H1 (cell line): ENCODE measurements at regions of chr20 and their contacts with region 1.

Region 1: GRCh38 chr20:5222919-5223634 is 93.7 kb downstream of the PROKR2 start:
- DNase-seq: peak; percentile 13 to 68
- H3K4me3 ChIP-seq: no peak overlapping the region
- H3K27ac ChIP-seq: no peak overlapping the region
- H3K4me1 ChIP-seq: no peaks in the 10 kb centered on the region
- H3K27me3 ChIP-seq: no peaks in the 10 kb centered on the region
- CTCF ChIP-seq: peak; percentile 75 to 91 (median 78)
- EP300 ChIP-seq: no peak
- POLR2A ChIP-seq: no peak
- RAD21 ChIP-seq: peak; percentile 81 to 87

Region 2: DNA sequence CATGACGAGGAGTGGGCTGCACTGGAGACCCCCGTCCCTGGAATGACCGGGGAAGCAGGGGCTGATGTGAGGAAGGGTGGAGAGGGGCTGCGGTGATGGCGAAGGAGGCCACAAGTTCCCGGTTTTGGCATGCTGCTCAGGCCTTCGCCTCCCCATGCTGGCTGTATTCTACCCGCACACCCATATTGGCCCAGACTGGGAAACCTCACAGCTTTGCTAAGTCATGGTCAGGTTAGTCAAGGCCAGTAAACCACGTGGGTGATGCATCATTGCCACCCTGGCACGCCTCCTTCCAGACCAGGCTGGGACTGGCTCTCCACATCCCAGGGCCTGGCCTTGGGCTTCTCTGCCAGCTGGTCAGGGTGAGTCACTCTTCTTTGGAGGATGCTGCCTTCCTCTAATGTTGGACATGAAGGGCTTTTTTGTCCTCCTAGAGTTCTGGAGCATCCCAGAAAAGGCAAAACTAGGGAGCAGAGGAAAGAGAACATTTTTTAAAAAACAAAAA is 157.1 kb before region 1 on chr20:
- CTCF ChIA-PET with region 1: no interaction called
- POLR2A ChIA-PET with region 1: no interaction called
- DNase-seq: no peak
- H3K4me3 ChIP-seq: no peak overlapping the region
- H3K27ac ChIP-seq: no peak overlapping the region
- H3K4me1 ChIP-seq: peaks cover 0 to 3% (median 0%) of the 10 kb centered on the region in 4 experiments; a peak in 1 of 7 replicates
- H3K27me3 ChIP-seq: no peaks in the 10 kb centered on the region
- CTCF ChIP-seq: no peak
- EP300 ChIP-seq: no peak
- POLR2A ChIP-seq: no peak
- RAD21 ChIP-seq: no peak

Region 3: DNA sequence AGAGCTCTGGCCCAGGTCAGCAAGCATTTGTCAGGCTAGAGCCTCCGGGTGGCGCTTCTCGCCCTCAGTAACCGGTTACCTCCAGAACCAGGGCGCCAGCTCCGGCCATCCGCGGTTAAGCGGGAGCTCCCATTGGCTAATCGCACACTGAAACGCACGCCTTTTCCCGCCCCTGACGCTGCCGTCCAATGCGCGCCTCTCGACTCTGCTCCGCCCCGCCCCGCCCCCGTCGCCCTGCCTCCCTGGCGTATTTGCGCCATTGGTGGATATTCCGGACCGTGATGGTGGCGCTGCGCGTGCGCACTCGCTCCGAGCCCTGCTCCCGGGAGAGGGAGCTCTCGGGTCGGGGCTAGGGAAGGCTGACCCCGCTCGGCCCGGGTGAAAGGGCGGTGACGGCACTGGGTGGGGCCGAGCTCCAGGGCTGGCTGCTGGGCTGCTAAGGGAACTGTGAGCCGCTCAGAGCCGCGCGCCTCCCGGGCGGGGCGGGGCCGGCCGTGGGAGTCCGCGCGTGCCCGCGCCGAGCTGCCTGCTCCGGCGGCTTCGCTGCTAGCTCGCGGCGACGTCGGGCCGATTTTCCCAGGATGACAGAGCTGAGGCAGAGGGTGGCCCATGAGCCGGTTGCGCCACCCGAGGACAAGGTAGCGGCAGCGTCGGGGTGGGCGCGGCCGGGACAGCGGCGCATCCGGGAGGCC is 96.4 kb before region 1 on chr20 and contains the start of gene CDS2:
- CTCF ChIA-PET with region 1: interaction called, 16 read pairs
- POLR2A ChIA-PET with region 1: no interaction called
- DNase-seq: peak; percentile 98 to 100
- H3K4me3 ChIP-seq: peak within 1 kb of the TSS; percentile 74 to 86 (median 83)
- H3K27ac ChIP-seq: peak within 1 kb of the TSS; percentile 72
- H3K4me1 ChIP-seq: peaks cover 0 to 7% (median 2%) of the 10 kb centered on the region in 4 experiments; a peak in 2 of 7 replicates
- H3K27me3 ChIP-seq: no peaks in the 10 kb centered on the region
- CTCF ChIP-seq: peak; percentile 52 to 74 (median 60)
- EP300 ChIP-seq: no peak
- POLR2A ChIP-seq: peak in 1 of 2 experiments; percentile 75; a peak in 1 of 3 replicates
- RAD21 ChIP-seq: peak; percentile 48 to 58
- total RNA-seq, gene CDS2: 56.2 and 57.0 TPM in 2 replicates

Region 4: GRCh38 chr20:5150226-5151076 is 72.6 kb before region 1 on chr20:
- CTCF ChIA-PET with region 1: no interaction called
- POLR2A ChIA-PET with region 1: no interaction called
- DNase-seq: no peak
- H3K4me3 ChIP-seq: no peak overlapping the region
- H3K27ac ChIP-seq: no peak overlapping the region
- H3K4me1 ChIP-seq: peaks cover 0 to 2% (median 0%) of the 10 kb centered on the region in 4 experiments; a peak in 2 of 7 replicates
- H3K27me3 ChIP-seq: no peaks in the 10 kb centered on the region
- CTCF ChIP-seq: no peak
- EP300 ChIP-seq: no peak
- POLR2A ChIP-seq: no peak
- RAD21 ChIP-seq: no peak

Region 5: GRCh38 chr20:5171790-5172164 is 51.3 kb before region 1 on chr20:
- CTCF ChIA-PET with region 1: no interaction called
- POLR2A ChIA-PET with region 1: no interaction called
- DNase-seq: no peak
- H3K4me3 ChIP-seq: no peak overlapping the region
- H3K27ac ChIP-seq: no peak overlapping the region
- H3K4me1 ChIP-seq: peaks cover 9 to 31% (median 23%) of the 10 kb centered on the region in 4 experiments; a peak in 5 of 7 replicates
- H3K27me3 ChIP-seq: no peaks in the 10 kb centered on the region
- CTCF ChIP-seq: no peak
- EP300 ChIP-seq: no peak
- POLR2A ChIP-seq: no peak
- RAD21 ChIP-seq: no peak

Region 6: DNA sequence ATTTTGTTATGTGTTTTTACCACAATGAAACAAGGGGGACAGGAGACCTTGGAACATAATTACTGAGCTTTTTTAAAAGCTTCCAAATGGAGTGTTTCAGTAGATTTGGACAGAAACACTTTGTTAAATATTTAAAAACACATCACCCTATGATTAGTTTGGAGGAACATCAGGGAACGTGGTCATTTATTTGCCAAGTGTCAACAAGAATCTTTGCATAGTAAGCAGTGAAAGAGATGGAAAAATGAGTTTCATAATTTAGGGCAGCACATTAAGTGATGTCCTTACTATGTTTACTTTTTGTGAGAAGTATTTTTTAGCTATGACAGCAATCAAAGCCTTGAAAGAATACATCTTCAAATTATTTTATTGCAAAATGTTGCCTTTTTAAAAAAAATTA is 11.1 kb after region 1 on chr20:
- CTCF ChIA-PET with region 1: interaction called, 24 read pairs
- POLR2A ChIA-PET with region 1: no interaction called
- DNase-seq: no peak
- H3K4me3 ChIP-seq: no peak overlapping the region
- H3K27ac ChIP-seq: no peak overlapping the region
- H3K4me1 ChIP-seq: no peaks in the 10 kb centered on the region
- H3K27me3 ChIP-seq: no peaks in the 10 kb centered on the region
- CTCF ChIP-seq: no peak
- EP300 ChIP-seq: no peak
- POLR2A ChIP-seq: no peak
- RAD21 ChIP-seq: no peak

Region 7: GRCh38 chr20:5331340-5331739 is 108.3 kb after region 1 on chr20:
- CTCF ChIA-PET with region 1: no interaction called
- POLR2A ChIA-PET with region 1: no interaction called
- DNase-seq: no peak
- H3K4me3 ChIP-seq: no peak overlapping the region
- H3K27ac ChIP-seq: no peak overlapping the region
- H3K4me1 ChIP-seq: no peaks in the 10 kb centered on the region
- H3K27me3 ChIP-seq: no peaks in the 10 kb centered on the region
- CTCF ChIP-seq: no peak
- EP300 ChIP-seq: no peak
- POLR2A ChIP-seq: no peak
- RAD21 ChIP-seq: no peak

Region 8: DNA sequence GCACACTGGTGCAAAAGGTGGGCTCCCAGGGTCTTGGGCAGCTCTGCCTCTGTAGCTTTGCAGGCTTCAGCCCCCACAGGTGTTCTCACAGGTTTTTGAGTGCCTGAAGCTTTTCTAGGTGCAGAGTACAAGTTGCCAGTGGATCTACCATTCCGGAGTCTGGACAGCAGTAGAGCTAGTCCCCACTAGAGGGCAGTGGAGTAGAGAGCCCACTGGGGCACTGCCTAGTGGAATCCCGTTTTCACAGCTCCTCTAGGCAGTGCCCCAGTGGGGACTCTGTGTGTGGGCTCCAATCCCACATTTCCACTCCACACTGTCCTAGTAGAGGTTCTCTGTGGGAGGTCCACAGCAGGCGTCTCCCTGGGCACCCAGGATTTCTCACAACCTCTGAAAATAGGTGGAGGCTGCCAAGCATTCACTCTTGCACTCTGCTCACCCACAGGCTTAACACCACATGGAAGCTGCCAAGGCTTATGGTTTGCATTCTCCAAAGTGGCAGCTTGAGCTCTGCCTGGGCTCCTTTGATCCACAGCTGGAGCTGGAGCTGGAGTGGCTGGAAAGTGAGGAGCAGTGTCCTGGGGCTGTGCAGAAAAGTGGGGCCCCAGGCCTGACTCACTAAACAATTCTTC is 179.9 kb after region 1 on chr20:
- CTCF ChIA-PET with region 1: interaction called, 15 read pairs
- POLR2A ChIA-PET with region 1: no interaction called
- DNase-seq: peak in 1 of 2 experiments; percentile 74
- H3K4me3 ChIP-seq: no peak overlapping the region
- H3K27ac ChIP-seq: no peak overlapping the region
- H3K4me1 ChIP-seq: no peaks in the 10 kb centered on the region
- H3K27me3 ChIP-seq: no peaks in the 10 kb centered on the region
- CTCF ChIP-seq: peak; percentile 74 to 78 (median 75)
- EP300 ChIP-seq: no peak
- POLR2A ChIP-seq: no peak
- RAD21 ChIP-seq: peak; percentile 62 to 73

Region 9: DNA sequence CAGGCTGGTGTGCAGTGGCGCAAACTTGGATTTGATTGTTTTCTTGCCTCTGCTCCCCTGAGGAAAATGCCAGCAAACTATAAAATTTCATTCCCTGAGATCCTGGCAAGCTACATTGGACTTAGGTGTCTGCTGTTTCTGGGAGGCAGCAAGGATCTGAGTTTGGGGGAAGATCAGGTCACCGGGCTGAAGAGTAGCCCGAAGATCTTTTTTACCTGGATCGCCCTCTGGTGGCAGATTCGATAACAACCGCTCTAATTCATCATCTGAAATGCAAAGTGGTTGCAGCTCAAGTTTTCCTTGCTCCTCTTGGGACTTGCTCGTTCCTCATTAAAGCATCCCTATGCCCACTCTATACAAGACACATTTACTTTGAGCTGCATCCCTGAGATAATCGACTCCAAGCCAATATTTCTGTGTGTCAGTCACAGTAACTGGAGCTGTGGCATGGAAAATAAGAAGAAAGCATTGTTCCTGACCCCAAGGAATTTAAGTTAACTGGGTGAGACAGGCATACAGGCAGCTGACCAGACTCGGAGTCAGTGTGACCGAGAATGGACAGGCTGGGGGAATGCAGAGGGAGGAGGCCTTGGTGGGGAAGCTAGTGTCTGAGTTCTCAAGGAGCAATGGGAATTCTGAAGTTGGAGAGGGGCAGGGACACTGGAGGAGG is 225.5 kb after region 1 on chr20:
- CTCF ChIA-PET with region 1: interaction called, 28 read pairs
- POLR2A ChIA-PET with region 1: no interaction called
- DNase-seq: peak; percentile 36 to 90
- H3K4me3 ChIP-seq: no peak overlapping the region; a peak in 1 of 8 replicates
- H3K27ac ChIP-seq: no peak overlapping the region
- H3K4me1 ChIP-seq: no peaks in the 10 kb centered on the region
- H3K27me3 ChIP-seq: no peaks in the 10 kb centered on the region
- CTCF ChIP-seq: peak; percentile 30 to 78 (median 71)
- EP300 ChIP-seq: no peak
- POLR2A ChIP-seq: no peak
- RAD21 ChIP-seq: peak; percentile 73 to 77